IMR-90 (cell line): ENCODE measurements at regions of chr13 and their contacts with region 1.

Region 1: GRCh38 chr13:100365680-100366079 is 222.9 kb downstream of the GGACT start:
- DNase-seq: peak; percentile 8
- ATAC-seq: no peak
- H3K4me3 ChIP-seq: no peak overlapping the region
- H3K27ac ChIP-seq: no peak overlapping the region
- H3K4me1 ChIP-seq: peaks cover 8% of the 10 kb centered on the region
- H3K27me3 ChIP-seq: no peaks in the 10 kb centered on the region
- CTCF ChIP-seq: no peak
- POLR2A ChIP-seq: no peak
- RAD21 ChIP-seq: no peak

Region 2: GRCh38 chr13:100262404-100262803 is 103.3 kb before region 1 on chr13:
- CTCF ChIA-PET with region 1: no interaction called
- POLR2A ChIA-PET with region 1: no interaction called
- dilution Hi-C with region 1: no loop called
- in situ Hi-C with region 1: no loop called
- intact Hi-C with region 1: no loop called
- DNase-seq: no peak
- ATAC-seq: no peak
- H3K4me3 ChIP-seq: no peak overlapping the region
- H3K27ac ChIP-seq: no peak overlapping the region
- H3K4me1 ChIP-seq: no peaks in the 10 kb centered on the region
- H3K27me3 ChIP-seq: no peaks in the 10 kb centered on the region
- CTCF ChIP-seq: no peak
- POLR2A ChIP-seq: no peak
- RAD21 ChIP-seq: no peak

Region 3: DNA sequence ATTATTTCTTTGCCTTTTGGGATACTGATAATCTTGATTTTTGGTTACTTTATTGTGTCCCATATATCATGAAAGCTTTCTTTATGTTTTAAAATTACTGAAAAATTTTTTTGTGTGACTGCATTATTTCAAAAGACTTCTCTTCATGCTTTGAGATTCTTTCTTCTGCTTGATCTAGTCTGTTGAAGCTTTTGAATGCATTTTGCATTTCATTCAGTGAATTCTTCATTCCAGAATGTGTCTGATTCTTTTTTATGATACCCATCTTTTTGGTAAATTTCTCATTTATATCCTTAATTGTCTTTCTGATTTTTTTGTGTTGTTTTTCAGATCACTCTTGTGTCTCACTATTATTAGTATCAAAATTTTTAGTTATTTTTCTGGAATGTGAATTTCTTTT is 12.9 kb after region 1 on chr13:
- CTCF ChIA-PET with region 1: no interaction called
- POLR2A ChIA-PET with region 1: interaction called, 16 read pairs
- dilution Hi-C with region 1: no loop called
- in situ Hi-C with region 1: no loop called
- intact Hi-C with region 1: no loop called
- DNase-seq: no peak
- ATAC-seq: no peak
- H3K4me3 ChIP-seq: no peak overlapping the region
- H3K27ac ChIP-seq: no peak overlapping the region
- H3K4me1 ChIP-seq: peaks cover 8% of the 10 kb centered on the region
- H3K27me3 ChIP-seq: no peaks in the 10 kb centered on the region
- CTCF ChIP-seq: no peak
- POLR2A ChIP-seq: no peak
- RAD21 ChIP-seq: no peak

Region 4: GRCh38 chr13:100392709-100393641 is 27.3 kb after region 1 on chr13:
- CTCF ChIA-PET with region 1: no interaction called
- POLR2A ChIA-PET with region 1: interaction called, 10 read pairs
- dilution Hi-C with region 1: no loop called
- in situ Hi-C with region 1: no loop called
- intact Hi-C with region 1: no loop called
- DNase-seq: peak; percentile 100
- ATAC-seq: peak; percentile 84
- H3K4me3 ChIP-seq: no peak overlapping the region
- H3K27ac ChIP-seq: peak overlapping the region; percentile 99
- H3K4me1 ChIP-seq: peaks cover 11% of the 10 kb centered on the region
- H3K27me3 ChIP-seq: no peaks in the 10 kb centered on the region
- CTCF ChIP-seq: 0 out of 2 replicates have a peak, but pooled peaks have one; percentile 9
- POLR2A ChIP-seq: no peak
- RAD21 ChIP-seq: peak; percentile 22; the same call in 1 of the 2 replicates

Region 5: DNA sequence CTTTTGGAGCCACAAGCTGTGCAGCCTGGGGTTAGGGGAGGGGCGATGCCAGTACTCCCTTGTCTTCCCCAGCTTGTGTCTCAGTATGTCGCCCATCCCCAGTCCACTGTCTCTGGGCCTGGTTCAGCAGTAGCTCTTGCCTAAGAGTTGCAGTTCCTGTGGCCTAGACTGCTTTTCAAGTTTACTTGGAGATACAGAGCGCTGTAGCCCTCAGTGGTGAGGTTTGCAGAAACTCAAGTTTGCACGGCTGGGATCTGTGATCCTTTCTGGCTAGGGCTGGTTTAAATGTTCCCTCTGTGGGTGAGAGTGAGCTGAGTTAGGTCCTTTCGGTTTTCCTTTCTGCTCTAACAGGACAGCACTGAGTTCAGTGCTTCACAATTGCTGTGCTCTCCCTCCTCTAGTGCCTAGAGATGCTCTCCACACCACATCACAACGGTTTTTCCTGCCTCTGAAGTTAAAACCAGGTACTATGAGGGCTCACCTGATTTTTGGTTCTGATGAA is 669.5 kb after region 1 on chr13:
- CTCF ChIA-PET with region 1: no interaction called
- POLR2A ChIA-PET with region 1: no interaction called
- dilution Hi-C with region 1: no loop called
- in situ Hi-C with region 1: no loop called
- intact Hi-C with region 1: no loop called
- DNase-seq: no peak
- ATAC-seq: 0 out of 2 replicates have a peak, but pooled peaks have one; percentile 11
- H3K4me3 ChIP-seq: no peak overlapping the region
- H3K27ac ChIP-seq: no peak overlapping the region
- H3K4me1 ChIP-seq: no peaks in the 10 kb centered on the region
- H3K27me3 ChIP-seq: no peaks in the 10 kb centered on the region; the same call in 1 of the 2 replicates
- CTCF ChIP-seq: no peak
- POLR2A ChIP-seq: no peak
- RAD21 ChIP-seq: no peak